ENCODE measurements at regions of chr19 and their contacts with region 1.

Region 1: DNA sequence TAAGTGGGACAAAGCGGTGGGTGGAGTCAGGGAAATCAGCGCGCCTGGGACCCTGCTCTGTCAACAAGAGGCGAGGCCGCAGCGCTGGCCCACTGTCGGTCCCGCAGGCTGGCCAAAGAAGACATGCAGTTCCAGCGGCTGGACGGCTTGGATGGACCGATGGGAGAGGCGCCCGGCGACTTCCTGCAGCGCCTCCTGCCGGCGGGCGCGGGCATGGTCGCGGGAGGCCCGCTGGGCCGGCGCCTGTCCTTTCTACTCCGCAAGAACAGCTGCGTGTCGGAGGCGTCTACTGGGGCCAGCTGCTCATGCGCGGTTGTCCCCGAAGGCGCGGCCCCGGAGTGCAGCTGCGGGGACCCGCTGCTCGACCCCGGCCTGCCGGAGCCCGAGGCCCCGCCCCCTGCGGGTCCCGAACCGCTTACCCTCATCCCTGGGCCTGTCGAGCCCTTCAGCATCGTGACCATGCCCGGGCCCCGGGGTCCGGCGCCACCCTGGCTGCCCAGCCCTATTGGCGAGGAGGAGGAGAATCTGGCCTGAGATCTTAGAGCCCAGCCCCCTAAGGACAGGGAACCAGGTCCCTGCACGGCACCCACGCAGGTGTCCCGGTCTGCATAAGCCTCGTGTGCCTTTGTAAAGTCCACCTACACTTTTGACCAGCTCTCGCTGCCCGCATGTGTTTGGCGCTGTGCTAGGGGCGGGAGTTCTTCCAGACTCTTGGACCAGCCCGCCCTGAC is 6.1 kb downstream of the BEST2 start:
- DNase-seq: peak; percentile 32 to 74 (median 49)
- ATAC-seq: peak; percentile 78
- H3K4me3 ChIP-seq: no peak overlapping the region
- H3K4me3 Mint-ChIP-seq: peak overlapping the region; percentile 18
- H3K27ac ChIP-seq: no peak overlapping the region
- H3K27ac Mint-ChIP-seq: no peak overlapping the region
- H3K4me1 ChIP-seq: peaks cover 7% of the 10 kb centered on the region
- H3K4me1 Mint-ChIP-seq: peaks cover 6% of the 10 kb centered on the region
- H3K27me3 ChIP-seq: peaks cover 3 to 4% of the 10 kb centered on the region in 2 experiments
- H3K27me3 Mint-ChIP-seq: peaks cover 16% of the 10 kb centered on the region
- CTCF ChIP-seq: peak; percentile 93

Region 2: GRCh38 chr19:12580163-12580694 is 177.5 kb before region 1 on chr19:
- CTCF ChIA-PET with region 1: no interaction called
- POLR2A ChIA-PET with region 1: no interaction called
- intact Hi-C with region 1: no loop called
- DNase-seq: no peak
- ATAC-seq: no peak
- H3K4me3 ChIP-seq: no peak overlapping the region
- H3K4me3 Mint-ChIP-seq: no peak overlapping the region
- H3K27ac ChIP-seq: no peak overlapping the region
- H3K27ac Mint-ChIP-seq: no peak overlapping the region
- H3K4me1 ChIP-seq: no peaks in the 10 kb centered on the region
- H3K4me1 Mint-ChIP-seq: no peaks in the 10 kb centered on the region
- H3K27me3 ChIP-seq: no peaks in the 10 kb centered on the region
- H3K27me3 Mint-ChIP-seq: no peaks in the 10 kb centered on the region
- CTCF ChIP-seq: no peak

Region 3: GRCh38 chr19:12716861-12717260 is 40.8 kb before region 1 on chr19:
- CTCF ChIA-PET with region 1: interaction called, 26 read pairs
- POLR2A ChIA-PET with region 1: interaction called, 4 read pairs
- intact Hi-C with region 1: loop called (anchors 1 kb)
- DNase-seq: peak in 4 of 9 experiments; percentile 36 to 74 (median 62)
- ATAC-seq: peak; percentile 79
- H3K4me3 ChIP-seq: no peak overlapping the region
- H3K4me3 Mint-ChIP-seq: no peak overlapping the region
- H3K27ac ChIP-seq: no peak overlapping the region
- H3K27ac Mint-ChIP-seq: no peak overlapping the region
- H3K4me1 ChIP-seq: peaks cover 16% of the 10 kb centered on the region
- H3K4me1 Mint-ChIP-seq: peaks cover 22% of the 10 kb centered on the region
- H3K27me3 ChIP-seq: no peaks in the 10 kb centered on the region
- H3K27me3 Mint-ChIP-seq: no peaks in the 10 kb centered on the region
- CTCF ChIP-seq: no peak

Region 4: GRCh38 chr19:12727745-12728433 is 29.8 kb before region 1 on chr19:
- CTCF ChIA-PET with region 1: interaction called, 12 read pairs
- POLR2A ChIA-PET with region 1: interaction called, 3 read pairs
- intact Hi-C with region 1: loop called in 1 of 2 experiments (anchors 2 kb)
- DNase-seq: no peak
- ATAC-seq: no peak
- H3K4me3 ChIP-seq: no peak overlapping the region
- H3K4me3 Mint-ChIP-seq: no peak overlapping the region
- H3K27ac ChIP-seq: no peak overlapping the region
- H3K27ac Mint-ChIP-seq: no peak overlapping the region
- H3K4me1 ChIP-seq: peaks cover 25% of the 10 kb centered on the region
- H3K4me1 Mint-ChIP-seq: peaks cover 31% of the 10 kb centered on the region
- H3K27me3 ChIP-seq: no peaks in the 10 kb centered on the region
- H3K27me3 Mint-ChIP-seq: no peaks in the 10 kb centered on the region
- CTCF ChIP-seq: no peak

Measured in CD8-positive, alpha-beta T cell (primary cell).